A673 (cell line): ENCODE measurements at regions of chr3 and their contacts with region 1.

Region 1: DNA sequence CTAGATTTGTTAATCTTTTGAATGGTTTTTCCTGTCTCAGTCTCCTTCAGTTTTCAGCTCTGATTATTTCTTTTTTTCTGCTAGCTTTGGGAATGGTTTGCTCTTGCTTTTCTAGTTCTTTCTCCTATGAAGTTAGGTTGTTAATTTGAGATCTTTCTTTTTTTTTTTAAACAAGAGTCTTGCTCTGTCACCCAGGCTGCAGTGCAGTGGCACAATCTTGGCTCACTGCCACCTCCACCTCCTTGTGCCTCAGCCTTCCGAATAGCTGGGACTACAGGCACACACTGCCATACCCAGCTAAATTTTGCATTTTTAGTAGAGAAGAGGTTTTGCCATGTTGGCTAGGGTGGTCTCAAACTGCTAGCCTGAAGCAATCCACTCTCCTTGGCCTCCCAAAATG is 56.7 kb downstream of the UQCC5 start:
- DNase-seq: no peak
- H3K4me3 ChIP-seq: no peak overlapping the region
- H3K27ac ChIP-seq: no peak overlapping the region
- H3K4me1 ChIP-seq: no peaks in the 10 kb centered on the region
- H3K27me3 ChIP-seq: no peaks in the 10 kb centered on the region
- CTCF ChIP-seq: no peak

Region 2: GRCh38 chr3:52204337-52205073 is 388.6 kb before region 1 on chr3:
- CTCF ChIA-PET with region 1: no interaction called
- POLR2A ChIA-PET with region 1: no interaction called
- intact Hi-C with region 1: no loop called
- DNase-seq: no peak
- H3K4me3 ChIP-seq: no peak overlapping the region
- H3K27ac ChIP-seq: no peak overlapping the region
- H3K4me1 ChIP-seq: no peaks in the 10 kb centered on the region
- H3K27me3 ChIP-seq: no peaks in the 10 kb centered on the region
- CTCF ChIP-seq: no peak

Region 3: GRCh38 chr3:52220380-52221026 is 372.6 kb before region 1 on chr3:
- CTCF ChIA-PET with region 1: no interaction called
- POLR2A ChIA-PET with region 1: no interaction called
- intact Hi-C with region 1: no loop called
- DNase-seq: peak; percentile 71
- H3K4me3 ChIP-seq: no peak overlapping the region
- H3K27ac ChIP-seq: no peak overlapping the region
- H3K4me1 ChIP-seq: no peaks in the 10 kb centered on the region
- H3K27me3 ChIP-seq: no peaks in the 10 kb centered on the region
- CTCF ChIP-seq: peak; percentile 72

Region 4: GRCh38 chr3:52507359-52507758 is 85.7 kb before region 1 on chr3:
- CTCF ChIA-PET with region 1: no interaction called
- POLR2A ChIA-PET with region 1: no interaction called
- intact Hi-C with region 1: no loop called
- DNase-seq: no peak
- H3K4me3 ChIP-seq: no peak overlapping the region
- H3K27ac ChIP-seq: no peak overlapping the region
- H3K4me1 ChIP-seq: no peaks in the 10 kb centered on the region
- H3K27me3 ChIP-seq: no peaks in the 10 kb centered on the region
- CTCF ChIP-seq: no peak

Region 5: DNA sequence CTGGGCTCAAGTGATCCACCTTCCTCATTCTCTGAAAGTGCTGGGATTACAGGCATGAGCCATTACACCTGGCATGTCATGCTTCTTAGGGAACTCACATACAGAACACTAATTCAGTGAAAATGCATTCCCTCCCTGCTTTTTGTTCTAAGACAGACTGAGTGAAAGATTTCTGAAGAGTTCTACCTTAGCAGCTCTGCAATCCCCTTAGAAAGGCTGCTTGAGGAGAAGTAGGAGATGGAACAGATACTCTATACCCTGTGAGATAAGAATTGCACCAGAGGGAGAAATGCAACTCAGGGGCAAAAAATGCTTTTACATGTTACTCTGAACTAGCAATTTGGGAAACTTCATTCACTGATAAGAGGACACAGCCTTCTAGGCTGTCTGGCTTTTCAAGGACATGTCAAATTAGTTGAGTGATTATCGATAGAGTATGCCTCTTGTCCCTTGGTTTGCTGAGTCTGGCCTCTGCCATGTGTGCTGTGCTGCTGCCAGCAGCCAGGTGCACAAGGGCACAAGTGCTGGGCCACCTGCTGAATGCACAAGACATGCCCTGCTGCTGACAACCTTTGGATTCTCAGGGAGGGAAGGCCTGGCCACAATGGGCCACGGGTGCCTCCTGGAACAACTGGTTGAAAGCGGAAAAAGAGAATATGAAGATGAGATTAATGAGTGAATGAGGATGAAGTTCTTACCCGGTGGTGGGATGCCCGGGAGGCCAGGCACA is 38.9 kb before region 1 on chr3:
- CTCF ChIA-PET with region 1: no interaction called
- POLR2A ChIA-PET with region 1: interaction called, 11 read pairs
- intact Hi-C with region 1: no loop called
- DNase-seq: no peak
- H3K4me3 ChIP-seq: no peak overlapping the region
- H3K27ac ChIP-seq: no peak overlapping the region
- H3K4me1 ChIP-seq: no peaks in the 10 kb centered on the region
- H3K27me3 ChIP-seq: no peaks in the 10 kb centered on the region
- CTCF ChIP-seq: no peak